Activated CD8-positive, alpha-beta T cell treated with anti-CD3 and anti-CD28 coated beads for 36 hours (primary cell): ENCODE measurements at regions of chr1 and their contacts with region 1.

Region 1: DNA sequence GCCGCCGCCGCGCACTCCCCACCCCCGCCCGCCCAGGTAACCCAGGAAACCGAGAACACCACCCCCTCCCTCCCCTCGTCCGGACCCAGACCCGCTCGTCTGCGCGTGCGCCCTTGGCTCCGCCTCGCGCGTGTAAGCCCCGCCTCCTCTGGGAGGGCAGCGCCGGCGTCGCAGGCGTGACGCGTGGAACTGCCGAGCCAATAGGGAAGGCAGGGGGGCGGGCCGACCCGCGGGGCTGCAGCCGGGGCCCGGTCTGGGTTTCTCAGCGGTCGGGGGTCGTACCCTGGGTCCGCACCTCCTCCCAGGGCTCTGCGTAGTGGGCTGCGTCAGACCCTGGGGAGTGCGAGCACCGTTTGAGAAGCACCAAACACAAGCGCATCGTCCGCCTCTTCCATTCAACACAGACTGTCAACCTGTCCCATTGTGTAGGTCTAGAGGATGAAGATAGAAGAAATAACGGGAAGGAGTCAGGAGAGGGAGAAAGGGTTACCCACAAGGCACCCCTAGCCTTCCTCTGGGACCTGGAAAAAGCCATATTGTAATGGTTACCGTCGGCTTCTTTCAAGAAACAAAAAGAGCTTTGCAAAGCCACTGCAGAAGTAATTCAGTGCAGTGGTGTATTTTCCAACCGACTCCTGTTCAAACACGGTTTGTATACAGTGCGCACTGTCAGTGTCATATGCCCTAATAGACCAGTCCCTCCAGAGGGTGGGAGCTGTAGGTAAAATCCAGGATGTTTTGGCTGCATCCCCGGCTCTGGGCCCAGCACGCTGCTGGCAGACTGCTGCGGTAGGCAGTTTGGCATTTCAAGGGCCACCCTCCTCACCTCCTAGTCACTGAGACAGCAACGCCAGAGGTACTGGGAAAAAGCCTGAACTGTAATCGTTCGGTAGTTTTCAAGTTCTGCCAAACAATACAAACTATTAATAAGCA is 473 bp upstream of the LYST start:
- DNase-seq: peak; percentile 97
- ATAC-seq: peak; percentile 80
- H3K4me3 Mint-ChIP-seq: peak overlapping the region; percentile 98
- H3K27ac Mint-ChIP-seq: peak overlapping the region; percentile 97
- H3K4me1 Mint-ChIP-seq: peaks cover 39% of the 10 kb centered on the region
- H3K27me3 Mint-ChIP-seq: no peaks in the 10 kb centered on the region
- CTCF ChIP-seq: no peak

Region 2: DNA sequence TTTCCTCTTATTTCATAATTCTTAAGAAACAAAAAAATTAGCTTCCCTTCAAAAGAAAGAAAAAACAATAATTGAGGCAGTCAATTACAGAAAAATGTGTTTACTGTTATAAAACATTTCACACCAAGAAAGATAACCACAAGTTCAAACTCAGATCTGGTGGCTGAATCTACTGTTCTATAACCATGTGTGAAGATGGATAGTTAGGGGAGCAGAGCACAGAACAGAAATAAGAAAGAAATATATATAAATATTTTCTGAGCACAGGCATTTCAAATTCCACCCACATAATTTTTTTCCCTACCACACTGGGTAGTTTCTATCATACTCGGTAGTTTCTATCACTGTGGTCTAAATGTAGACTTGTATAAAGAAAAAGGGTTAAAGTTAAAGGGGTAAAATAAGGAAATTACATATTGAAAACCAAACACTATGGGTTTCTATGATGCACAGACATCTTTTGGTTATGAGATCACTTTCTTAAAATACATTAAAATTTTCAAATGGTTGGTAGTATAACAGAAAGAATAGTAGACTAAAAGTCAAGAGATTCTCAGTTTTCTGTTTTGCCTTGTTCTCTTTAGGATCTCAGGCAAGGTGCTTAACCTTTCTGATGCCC is 11.3 kb before region 1 on chr1:
- CTCF ChIA-PET with region 1: interaction called, 12 read pairs
- POLR2A ChIA-PET with region 1: interaction called, 15 read pairs
- intact Hi-C with region 1: no loop called
- DNase-seq: no peak
- ATAC-seq: peak; percentile 74
- H3K4me3 Mint-ChIP-seq: peak overlapping the region; percentile 47
- H3K27ac Mint-ChIP-seq: peak overlapping the region; percentile 95
- H3K4me1 Mint-ChIP-seq: peaks cover 55% of the 10 kb centered on the region
- H3K27me3 Mint-ChIP-seq: no peaks in the 10 kb centered on the region
- CTCF ChIP-seq: no peak

Region 3: DNA sequence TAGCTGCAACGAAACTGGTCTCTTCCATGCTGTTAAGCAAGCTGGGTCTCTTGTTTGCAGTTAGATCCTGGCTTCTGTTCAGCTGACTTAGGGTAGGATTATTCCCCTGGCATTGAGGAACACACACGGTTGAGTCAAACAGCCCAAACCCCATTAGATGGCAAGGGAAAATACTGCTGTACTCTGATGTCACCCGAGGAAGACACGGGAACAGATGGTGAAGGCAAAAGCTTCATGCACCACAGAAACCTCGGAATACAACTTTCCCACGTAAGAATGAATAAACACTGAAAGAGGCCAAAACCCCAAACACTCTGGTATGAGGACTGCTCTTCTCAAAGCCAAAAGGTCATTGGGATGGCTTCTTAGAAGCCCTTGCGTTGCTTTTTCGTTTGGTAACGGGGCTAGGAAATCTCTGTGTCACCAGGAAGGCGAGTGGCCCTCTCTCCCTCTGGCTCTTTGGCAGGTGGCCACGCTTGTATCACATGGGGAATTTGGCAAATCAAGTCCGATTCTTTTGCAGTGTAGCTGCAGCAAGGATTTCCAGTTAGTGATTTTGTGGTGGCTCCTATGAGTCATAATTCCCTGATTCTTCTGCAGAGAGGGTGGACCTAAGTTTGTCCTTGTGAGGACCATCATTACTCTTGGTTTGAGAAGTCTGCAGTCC is 16.2 kb after region 1 on chr1:
- CTCF ChIA-PET with region 1: interaction called, 6 read pairs
- POLR2A ChIA-PET with region 1: interaction called, 33 read pairs
- intact Hi-C with region 1: loop called (anchors 2 kb)
- DNase-seq: peak; percentile 62
- ATAC-seq: peak; percentile 1
- H3K4me3 Mint-ChIP-seq: peak overlapping the region; percentile 65
- H3K27ac Mint-ChIP-seq: peak overlapping the region; percentile 55
- H3K4me1 Mint-ChIP-seq: peaks cover 63% of the 10 kb centered on the region
- H3K27me3 Mint-ChIP-seq: no peaks in the 10 kb centered on the region
- CTCF ChIP-seq: no peak